HEK293T (cell line): ENCODE measurements at regions of chr17 and their contacts with region 1.

Region 1: GRCh38 chr17:41930009-41930832 is at the start of gene ODAD4:
- DNase-seq: peak; percentile 99

Region 2: DNA sequence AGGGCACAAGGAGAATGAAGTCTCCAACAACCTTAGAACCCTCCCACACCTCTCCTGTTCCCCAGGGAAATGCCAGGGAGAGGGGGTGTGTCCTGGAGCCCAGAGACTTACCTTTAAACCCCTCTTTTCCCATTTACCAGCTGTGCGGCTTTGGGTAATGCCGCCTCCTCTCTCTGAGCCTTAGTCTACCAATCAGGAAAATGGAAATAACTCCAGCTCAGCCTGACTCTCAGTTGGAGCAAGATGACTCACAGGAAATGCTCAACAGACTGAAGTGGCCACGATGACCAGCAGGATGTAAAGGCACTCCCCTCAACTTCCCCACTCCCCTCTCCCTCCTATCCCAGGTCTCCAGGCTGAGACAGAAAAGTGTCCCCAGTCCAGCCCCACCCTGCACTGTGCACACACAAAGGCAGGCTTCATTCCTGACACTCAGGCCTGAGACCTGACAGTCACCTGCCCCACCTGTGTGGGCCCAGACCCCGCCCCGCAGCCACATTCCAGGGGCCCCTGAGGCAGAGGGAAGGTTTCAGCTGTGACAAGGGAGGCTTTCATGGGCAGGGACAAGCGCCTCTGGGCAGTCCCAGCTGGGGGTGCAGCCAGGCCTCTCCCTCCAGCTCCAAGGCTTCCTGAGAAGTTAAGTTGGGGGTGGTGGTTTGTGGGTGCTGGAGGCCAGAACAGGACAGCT is 408.5 kb before region 1 on chr17:
- CTCF ChIA-PET with region 1: no interaction called
- POLR2A ChIA-PET with region 1: no interaction called
- DNase-seq: no peak

Region 3: DNA sequence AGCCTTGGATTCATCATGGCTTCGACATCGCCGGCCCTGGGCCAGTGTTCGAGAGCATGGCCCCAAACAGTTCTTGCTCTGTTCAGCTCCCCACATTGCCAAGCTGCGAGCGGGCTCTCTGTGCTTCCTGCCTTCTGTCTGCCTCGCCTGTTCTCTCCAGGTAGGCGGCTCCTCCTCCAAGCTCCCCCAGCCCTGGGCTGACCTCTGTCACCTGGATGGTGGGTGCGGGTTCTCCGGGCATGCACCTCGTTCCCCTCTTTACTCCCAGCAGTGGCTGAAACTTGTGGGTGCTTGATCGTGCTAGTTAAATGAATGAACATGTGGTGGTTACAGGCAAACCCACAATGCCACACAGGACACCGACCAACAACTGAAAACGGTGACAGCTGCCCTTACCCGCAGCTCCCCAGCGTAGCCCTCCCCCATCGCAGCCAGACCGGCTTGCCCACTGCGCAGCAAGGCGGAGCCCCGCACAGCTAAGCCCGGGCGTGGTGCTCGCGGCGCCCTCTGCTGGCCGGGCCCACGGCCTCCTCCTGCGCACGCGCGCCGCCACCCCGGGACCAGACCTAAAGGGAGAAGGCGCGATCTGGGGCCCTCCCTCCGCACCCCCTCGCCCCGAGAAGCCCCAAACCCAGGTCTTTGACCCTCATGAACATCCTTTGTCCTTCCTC is 264.5 kb before region 1 on chr17:
- CTCF ChIA-PET with region 1: interaction called, 12 read pairs
- POLR2A ChIA-PET with region 1: no interaction called
- DNase-seq: peak; percentile 97

Region 4: GRCh38 chr17:41864836-41865595 is 65.2 kb before region 1 on chr17 and contains the start of gene KLHL11:
- CTCF ChIA-PET with region 1: no interaction called
- POLR2A ChIA-PET with region 1: interaction called, 18 read pairs
- DNase-seq: peak; percentile 96

Region 5: DNA sequence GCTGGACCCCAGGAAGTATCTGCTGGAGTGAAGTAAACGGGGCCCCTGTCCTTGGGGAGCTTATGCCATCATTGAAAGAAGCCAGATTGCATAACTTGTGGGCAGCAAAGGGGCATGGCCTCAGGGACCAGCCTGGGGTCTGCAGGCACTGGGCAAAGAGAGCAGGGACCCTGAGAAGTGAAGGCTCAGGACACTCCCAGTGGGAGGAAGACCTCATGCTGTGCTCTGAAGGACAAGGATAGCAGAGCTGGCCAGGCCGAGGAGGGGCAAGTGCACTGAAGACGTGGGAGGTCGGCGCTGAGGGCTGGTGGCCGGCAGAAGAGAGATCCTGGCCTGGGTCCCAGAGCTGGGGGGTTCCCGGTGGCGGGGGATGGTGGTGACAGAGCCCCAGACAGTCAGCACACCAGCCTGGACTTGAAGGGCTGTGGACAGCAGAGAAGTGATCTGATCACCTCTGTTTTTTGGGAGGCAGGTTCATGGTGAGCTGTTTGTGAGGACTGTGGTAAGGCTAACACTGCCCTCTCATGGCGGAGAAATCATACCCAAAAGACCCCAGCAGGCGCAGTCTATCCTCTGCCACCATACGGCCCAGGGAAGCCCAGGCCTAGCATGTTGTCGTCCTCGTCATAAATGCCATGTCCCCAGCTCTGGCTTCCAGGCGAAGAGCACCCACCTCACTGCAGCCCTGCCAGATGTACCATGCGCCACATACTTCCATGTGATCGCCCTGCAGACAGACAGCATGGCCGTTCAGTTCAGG is 29.3 kb after region 1 on chr17:
- CTCF ChIA-PET with region 1: interaction called, 8 read pairs
- POLR2A ChIA-PET with region 1: interaction called, 31 read pairs
- DNase-seq: peak; percentile 60